Activated CD4-positive, alpha-beta T cell treated with anti-CD3 and anti-CD28 coated beads for 36 hours (primary cell): ENCODE measurements at regions of chr12 and their contacts with region 1.

Region 1: GRCh38 chr12:32455607-32456071 is 56.3 kb downstream of the FGD4 start:
- DNase-seq: peak; percentile 8
- ATAC-seq: no peak
- H3K4me3 Mint-ChIP-seq: no peak overlapping the region
- H3K27ac Mint-ChIP-seq: no peak overlapping the region
- H3K4me1 Mint-ChIP-seq: no peaks in the 10 kb centered on the region
- H3K27me3 Mint-ChIP-seq: peaks cover 1% of the 10 kb centered on the region

Region 2: DNA sequence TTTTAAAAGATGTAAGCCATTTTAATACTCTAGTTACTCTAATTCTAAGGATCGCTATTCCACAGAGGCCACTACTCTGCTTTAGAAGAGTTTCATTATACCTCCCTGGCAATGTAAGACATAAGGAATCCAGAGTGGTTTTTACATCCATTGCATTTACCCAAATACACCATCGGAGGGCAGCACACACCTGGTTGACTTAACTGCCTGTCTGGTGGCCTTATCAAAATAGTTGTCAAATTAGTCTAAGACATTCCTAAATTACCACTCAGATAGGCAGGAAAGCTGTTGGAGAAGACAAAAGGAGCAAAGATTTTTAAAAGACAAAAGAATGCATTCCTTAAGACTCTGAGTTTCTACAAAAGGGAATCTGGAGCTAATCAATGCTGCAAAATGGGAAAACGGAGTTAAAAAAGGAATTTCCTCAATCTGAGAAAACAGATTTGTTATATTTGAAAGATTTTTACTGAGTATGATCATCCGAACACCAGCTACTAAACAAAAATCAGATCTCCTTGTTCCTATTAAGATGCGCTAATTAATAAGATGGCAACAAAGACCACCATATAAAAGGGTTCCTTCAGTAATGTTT is 90.1 kb before region 1 on chr12:
- CTCF ChIA-PET with region 1: no interaction called
- POLR2A ChIA-PET with region 1: no interaction called
- intact Hi-C with region 1: loop called in 1 of 2 experiments (anchors 5 kb)
- DNase-seq: peak; percentile 64
- ATAC-seq: peak; percentile 49
- H3K4me3 Mint-ChIP-seq: no peak overlapping the region
- H3K27ac Mint-ChIP-seq: no peak overlapping the region
- H3K4me1 Mint-ChIP-seq: no peaks in the 10 kb centered on the region
- H3K27me3 Mint-ChIP-seq: no peaks in the 10 kb centered on the region

Region 3: DNA sequence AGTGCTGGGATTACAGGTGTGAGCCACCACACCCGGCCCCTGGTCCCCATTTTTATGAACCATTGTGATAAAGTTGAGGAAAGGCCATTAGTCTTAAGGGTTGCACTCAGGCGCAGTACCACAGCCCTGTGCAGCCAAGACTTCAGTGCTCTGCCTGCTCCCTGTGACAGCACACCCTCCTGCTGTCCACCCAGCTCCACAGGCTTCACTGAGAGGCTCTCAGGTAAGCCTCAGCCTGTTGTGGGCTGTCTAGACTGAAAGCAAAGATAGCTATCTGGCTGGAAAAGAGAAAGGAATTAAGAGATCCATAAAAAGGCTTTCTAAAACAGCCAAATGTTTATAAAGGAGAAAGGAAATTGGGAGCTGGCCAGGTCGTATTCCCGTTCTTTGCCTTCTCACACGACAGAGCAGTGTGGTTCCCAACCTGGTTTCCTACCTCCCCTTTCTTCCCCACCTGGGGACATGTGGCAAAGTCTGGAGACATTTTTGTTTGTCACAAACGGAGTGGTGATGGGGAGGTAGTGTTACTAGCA is 204.3 kb after region 1 on chr12:
- CTCF ChIA-PET with region 1: no interaction called
- POLR2A ChIA-PET with region 1: no interaction called
- intact Hi-C with region 1: loop called in 1 of 2 experiments (anchors 5 kb)
- DNase-seq: no peak
- ATAC-seq: no peak
- H3K4me3 Mint-ChIP-seq: no peak overlapping the region
- H3K27ac Mint-ChIP-seq: no peak overlapping the region
- H3K4me1 Mint-ChIP-seq: peaks cover 4% of the 10 kb centered on the region
- H3K27me3 Mint-ChIP-seq: no peaks in the 10 kb centered on the region

Region 4: GRCh38 chr12:32671930-32672780 is 216.5 kb after region 1 on chr12:
- CTCF ChIA-PET with region 1: interaction called, 15 read pairs
- POLR2A ChIA-PET with region 1: no interaction called
- intact Hi-C with region 1: loop called (anchors 1 to 2 kb)
- DNase-seq: peak; percentile 31
- ATAC-seq: no peak
- H3K4me3 Mint-ChIP-seq: no peak overlapping the region
- H3K27ac Mint-ChIP-seq: no peak overlapping the region
- H3K4me1 Mint-ChIP-seq: no peaks in the 10 kb centered on the region
- H3K27me3 Mint-ChIP-seq: peaks cover 3% of the 10 kb centered on the region

Region 5: DNA sequence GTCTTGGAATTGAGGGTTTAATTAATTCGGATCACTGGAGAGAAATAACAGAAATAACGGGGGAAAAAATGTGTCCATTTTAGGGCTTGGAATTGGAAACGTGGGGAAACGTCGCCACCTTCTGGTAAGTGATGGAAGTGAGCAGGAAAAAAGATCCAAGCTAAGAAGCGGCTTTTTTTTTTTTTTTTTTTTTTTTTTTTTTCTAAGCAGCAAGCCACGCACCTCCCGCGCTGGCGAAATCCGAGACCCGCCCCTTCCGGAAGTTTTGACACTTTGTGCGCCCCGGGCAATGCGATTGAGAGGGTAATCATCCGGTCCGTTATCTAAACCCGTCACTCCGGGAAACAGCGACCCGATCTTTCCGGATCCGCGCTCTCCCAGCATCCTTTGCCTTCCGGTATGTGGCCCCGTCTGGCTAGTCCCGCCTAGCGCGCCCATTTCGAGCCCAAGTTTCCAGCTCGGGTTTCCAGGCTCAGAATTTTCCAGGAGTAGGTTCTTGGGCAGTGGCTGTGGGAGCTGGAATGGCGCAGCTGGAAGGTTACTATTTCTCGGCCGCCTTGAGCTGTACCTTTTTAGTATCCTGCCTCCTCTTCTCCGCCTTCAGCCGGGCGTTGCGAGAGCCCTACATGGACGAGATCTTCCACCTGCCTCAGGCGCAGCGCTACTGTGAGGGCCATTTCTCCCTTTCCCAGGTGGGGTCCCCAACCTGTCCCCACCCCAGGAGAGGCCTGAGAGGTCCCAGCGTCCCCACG is 1566.6 kb after region 1 on chr12 and contains the start of gene ALG10:
- CTCF ChIA-PET with region 1: no interaction called
- POLR2A ChIA-PET with region 1: no interaction called
- intact Hi-C with region 1: loop called (anchors 5 kb)
- DNase-seq: peak; percentile 97
- ATAC-seq: peak; percentile 100
- H3K4me3 Mint-ChIP-seq: peak within 1 kb of the TSS; percentile 96
- H3K27ac Mint-ChIP-seq: peak within 1 kb of the TSS; percentile 98
- H3K4me1 Mint-ChIP-seq: peaks cover 27% of the 10 kb centered on the region
- H3K27me3 Mint-ChIP-seq: no peaks in the 10 kb centered on the region
- total RNA-seq, gene ALG10: 22.6 to 25.1 TPM